HepG2 (cell line): ENCODE measurements at regions of chr5 and their contacts with region 1.

Region 1: DNA sequence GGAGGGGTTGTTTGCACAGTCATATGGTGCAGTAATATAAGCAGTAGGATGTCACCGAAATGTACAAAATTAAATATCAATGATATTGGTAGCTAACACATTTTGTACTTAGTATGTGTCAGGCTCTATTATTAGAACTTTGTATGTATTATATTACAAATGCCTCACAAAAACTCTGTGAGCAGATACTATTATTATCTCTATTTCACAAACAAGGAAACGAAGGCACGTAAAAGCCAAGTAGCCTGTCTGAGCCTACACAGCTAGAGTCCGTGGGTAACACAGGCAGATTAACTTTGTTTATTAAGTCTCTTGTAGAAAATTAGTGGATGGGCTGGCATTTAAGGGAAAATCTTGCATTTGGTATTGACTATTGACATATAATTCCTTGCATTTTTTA is 284.3 kb upstream of the DAB2 start:
- DNase-seq: no peak
- ATAC-seq: no peak
- H3K4me3 ChIP-seq: no peak overlapping the region
- H3K27ac ChIP-seq: no peak overlapping the region
- H3K4me1 ChIP-seq: no peaks in the 10 kb centered on the region
- H3K27me3 ChIP-seq: no peaks in the 10 kb centered on the region; a peak in 1 of 5 replicates
- CTCF ChIP-seq: no peak
- EP300 ChIP-seq: no peak
- POLR2A ChIP-seq: no peak
- RAD21 ChIP-seq: no peak

Region 2: GRCh38 chr5:39671561-39671961 is 37.5 kb before region 1 on chr5:
- CTCF ChIA-PET with region 1: no interaction called
- POLR2A ChIA-PET with region 1: no interaction called
- in situ Hi-C with region 1: no loop called
- intact Hi-C with region 1: no loop called
- DNase-seq: no peak
- ATAC-seq: no peak
- H3K4me3 ChIP-seq: no peak overlapping the region
- H3K27ac ChIP-seq: no peak overlapping the region
- H3K4me1 ChIP-seq: no peaks in the 10 kb centered on the region
- H3K27me3 ChIP-seq: no peaks in the 10 kb centered on the region
- CTCF ChIP-seq: no peak
- EP300 ChIP-seq: no peak
- POLR2A ChIP-seq: no peak
- RAD21 ChIP-seq: no peak

Region 3: GRCh38 chr5:39912906-39913305 is 203.9 kb after region 1 on chr5:
- CTCF ChIA-PET with region 1: no interaction called
- POLR2A ChIA-PET with region 1: no interaction called
- in situ Hi-C with region 1: no loop called
- intact Hi-C with region 1: no loop called
- DNase-seq: no peak
- ATAC-seq: no peak
- H3K4me3 ChIP-seq: no peak overlapping the region
- H3K27ac ChIP-seq: no peak overlapping the region
- H3K4me1 ChIP-seq: no peaks in the 10 kb centered on the region
- H3K27me3 ChIP-seq: no peaks in the 10 kb centered on the region; a peak in 1 of 5 replicates
- CTCF ChIP-seq: no peak
- EP300 ChIP-seq: no peak
- POLR2A ChIP-seq: no peak
- RAD21 ChIP-seq: no peak

Region 4: GRCh38 chr5:41193456-41194205 is 1484.6 kb after region 1 on chr5:
- CTCF ChIA-PET with region 1: no interaction called
- POLR2A ChIA-PET with region 1: no interaction called
- in situ Hi-C with region 1: no loop called
- intact Hi-C with region 1: loop called (anchors 5 kb)
- DNase-seq: peak; percentile 58
- ATAC-seq: peak; percentile 75
- H3K4me3 ChIP-seq: no peak overlapping the region
- H3K27ac ChIP-seq: no peak overlapping the region
- H3K4me1 ChIP-seq: peaks cover 7% of the 10 kb centered on the region; the same call in 1 of the 2 replicates
- H3K27me3 ChIP-seq: no peaks in the 10 kb centered on the region
- CTCF ChIP-seq: no peak
- EP300 ChIP-seq: no peak
- POLR2A ChIP-seq: no peak
- RAD21 ChIP-seq: no peak